ENCODE measurements at regions of chr1 and their contacts with region 1.

Region 1: DNA sequence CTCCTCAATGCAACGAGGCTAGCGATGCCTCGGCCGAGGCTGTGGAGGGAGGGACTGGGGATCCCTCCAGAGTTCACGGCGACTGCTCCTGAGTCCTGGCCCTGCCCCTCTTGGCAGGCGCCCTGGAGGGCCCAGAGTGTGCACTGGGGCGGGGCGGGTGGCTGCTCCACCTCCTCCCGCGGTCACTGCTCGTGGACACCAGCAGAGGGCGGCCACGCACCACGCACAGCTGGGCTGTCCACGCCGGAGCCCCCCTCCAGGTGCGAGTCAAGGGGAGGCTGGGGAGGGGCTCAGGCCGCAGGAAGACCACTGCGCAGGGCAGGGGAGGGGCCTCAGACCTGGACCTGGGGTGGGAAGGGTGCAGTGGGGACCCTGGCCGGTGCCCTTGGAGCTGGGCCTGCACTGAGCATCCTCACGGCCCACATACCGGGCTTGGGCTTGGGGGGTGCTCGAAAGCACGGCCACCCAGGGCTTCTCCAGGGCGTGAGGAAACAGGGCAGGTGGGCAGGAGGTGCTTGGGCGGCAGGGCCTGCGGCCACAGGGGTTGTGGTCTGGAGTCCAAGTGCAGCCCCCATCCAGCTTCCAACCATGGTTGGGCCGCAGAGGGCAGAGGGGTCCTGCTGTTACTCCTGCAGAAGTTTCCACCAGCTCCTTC is 20.6 kb upstream of the TTC34 start:
- DNase-seq: peak; percentile 58 to 85 (median 84)
- ATAC-seq: peak; percentile 77 to 78
- H3K4me3 ChIP-seq: no peak overlapping the region
- H3K27ac ChIP-seq: no peak overlapping the region
- H3K4me1 ChIP-seq: no peaks in the 10 kb centered on the region
- H3K27me3 ChIP-seq: no peaks in the 10 kb centered on the region

Region 2: DNA sequence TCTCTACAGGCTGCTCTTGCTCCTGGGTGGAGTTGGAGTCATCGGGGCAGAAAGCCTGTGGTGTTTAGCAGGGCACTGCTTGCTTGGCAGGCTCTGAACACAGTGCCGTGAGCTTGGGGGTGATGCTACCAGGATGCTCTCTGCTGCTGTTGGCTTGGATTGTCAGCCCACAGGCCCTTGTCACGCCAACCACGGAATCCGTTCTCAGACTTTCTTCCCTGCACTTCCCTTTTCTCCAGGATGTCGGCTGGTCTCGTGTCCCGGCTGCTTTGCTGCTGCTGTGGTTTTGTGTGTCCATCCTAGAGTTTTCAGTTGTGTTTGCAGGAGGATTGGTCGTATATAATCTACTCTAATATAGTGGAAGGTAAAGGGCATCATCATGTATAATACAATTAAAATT is 23.8 kb after region 1 on chr1:
- intact Hi-C with region 1: loop called in 1 of 4 experiments (anchors 2 kb)
- DNase-seq: no peak
- ATAC-seq: no peak
- H3K4me3 ChIP-seq: no peak overlapping the region
- H3K27ac ChIP-seq: no peak overlapping the region
- H3K4me1 ChIP-seq: no peaks in the 10 kb centered on the region
- H3K27me3 ChIP-seq: no peaks in the 10 kb centered on the region

Region 3: GRCh38 chr1:3410142-3410925 is 588.2 kb after region 1 on chr1:
- intact Hi-C with region 1: loop called in 1 of 4 experiments (anchors 10 kb)
- DNase-seq: peak; percentile 67 to 91 (median 87)
- ATAC-seq: peak; percentile 74 to 83
- H3K4me3 ChIP-seq: no peak overlapping the region
- H3K27ac ChIP-seq: no peak overlapping the region
- H3K4me1 ChIP-seq: no peaks in the 10 kb centered on the region
- H3K27me3 ChIP-seq: no peaks in the 10 kb centered on the region

Region 4: GRCh38 chr1:3423245-3423829 is 601.2 kb after region 1 on chr1:
- intact Hi-C with region 1: loop called in 3 of 4 experiments (anchors 5 to 10 kb)
- DNase-seq: peak; percentile 76 to 88 (median 87)
- ATAC-seq: peak; percentile 84 to 85
- H3K4me3 ChIP-seq: no peak overlapping the region
- H3K27ac ChIP-seq: peak overlapping the region; percentile 8
- H3K4me1 ChIP-seq: no peaks in the 10 kb centered on the region
- H3K27me3 ChIP-seq: no peaks in the 10 kb centered on the region

Measured in right cardiac atrium (tissue), 5 donors.